GM18951 (cell line): ENCODE measurements at regions of chr11 and their contacts with region 1.

Region 1: DNA sequence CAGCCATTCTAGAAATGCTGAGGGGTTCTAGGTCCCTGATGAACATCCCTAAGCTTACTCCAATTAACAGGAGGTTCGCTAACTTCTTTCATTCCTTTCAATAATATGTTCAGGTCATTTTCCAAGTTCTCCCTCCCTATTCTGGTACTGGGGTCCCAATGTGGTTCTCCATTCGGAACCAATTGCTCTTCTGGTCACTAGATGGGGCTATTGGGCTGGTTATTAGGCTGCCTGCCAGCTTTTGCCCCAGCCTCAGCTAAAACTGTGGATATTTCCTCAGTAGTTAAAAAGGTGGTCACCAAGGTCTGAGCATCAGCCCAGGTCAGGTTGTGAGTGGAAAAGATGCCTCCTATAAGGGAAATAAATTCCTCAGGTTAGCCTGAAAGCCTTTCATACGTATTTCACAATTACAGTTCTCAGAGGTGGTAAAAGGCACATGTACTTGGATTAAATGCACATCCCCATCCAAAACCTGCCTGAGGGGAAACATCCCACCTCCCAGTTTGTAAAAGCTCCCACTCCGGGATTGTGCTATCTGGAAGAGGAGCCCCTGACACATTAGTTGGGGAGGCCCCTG is 161.1 kb upstream of the CCDC179 start:
- POLR2A ChIP-seq: no peak

Region 2: GRCh38 chr11:22521226-22521625 is 500.1 kb before region 1 on chr11:
- in situ Hi-C with region 1: no loop called
- POLR2A ChIP-seq: no peak

Region 3: GRCh38 chr11:22752908-22753310 is 268.5 kb before region 1 on chr11:
- in situ Hi-C with region 1: no loop called
- POLR2A ChIP-seq: no peak

Region 4: GRCh38 chr11:23112987-23113886 is 91.9 kb after region 1 on chr11:
- in situ Hi-C with region 1: loop called (anchors 10 kb)
- POLR2A ChIP-seq: no peak

Region 5: DNA sequence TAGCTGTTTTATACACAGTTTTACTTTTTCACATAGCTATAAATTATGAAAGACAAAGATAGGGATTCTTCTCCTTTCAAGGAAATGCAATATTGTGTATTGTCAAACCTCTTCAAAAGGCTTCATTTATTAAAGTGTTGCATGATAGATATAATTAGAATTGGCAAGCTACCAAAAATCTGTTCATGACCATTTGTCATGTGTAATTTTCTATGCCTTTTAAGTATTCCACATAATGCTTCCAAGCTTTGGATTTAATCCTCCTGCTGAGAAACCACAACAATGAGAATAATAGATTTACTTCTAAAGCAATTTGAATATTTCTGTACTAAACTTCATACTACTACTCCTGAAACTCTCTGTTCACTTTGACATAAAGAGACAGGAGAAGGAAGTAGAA is 242.1 kb after region 1 on chr11:
- in situ Hi-C with region 1: no loop called
- POLR2A ChIP-seq: no peak